ENCODE measurements at regions of chr10 and their contacts with region 1.

Region 1: DNA sequence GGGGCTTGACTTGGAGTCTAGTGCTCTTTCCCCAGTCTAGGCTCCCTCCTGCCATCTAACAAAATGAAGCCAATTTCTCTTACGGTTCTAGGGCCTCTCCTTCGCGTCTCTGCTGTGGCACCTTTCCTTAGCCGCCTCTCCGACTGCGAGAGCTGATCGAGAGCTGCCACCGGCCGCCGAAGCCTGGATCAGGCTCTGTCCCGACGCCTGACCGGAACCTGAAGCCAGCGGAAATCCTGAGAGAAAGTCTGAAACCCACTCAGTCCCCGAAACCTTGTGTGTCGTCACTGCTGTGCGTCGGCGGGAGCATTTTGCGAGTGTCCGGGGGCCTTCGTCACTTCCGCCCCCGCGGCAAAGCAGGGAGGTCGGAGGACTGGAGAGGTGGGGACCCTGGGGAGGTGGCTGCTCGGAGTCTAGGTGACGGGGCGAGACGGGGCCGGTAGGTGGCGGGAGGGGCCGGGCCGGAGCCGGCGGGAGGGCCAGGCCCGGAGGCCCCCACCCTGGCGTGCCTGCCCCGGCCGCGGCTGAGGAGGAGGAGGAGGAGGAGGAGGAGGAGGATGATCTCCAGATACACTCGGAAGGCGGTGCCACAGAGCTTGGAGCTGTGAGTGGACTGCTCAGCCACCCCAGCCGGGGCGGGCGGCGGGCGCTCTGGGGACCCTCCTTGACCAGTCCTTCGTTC is at the starts of genes ECD and FAM149B1:
- DNase-seq: peak; percentile 96
- H3K4me3 Mint-ChIP-seq: peak within 1 kb of the TSS; percentile 100
- H3K27ac Mint-ChIP-seq: peak within 1 kb of the TSS; percentile 100
- H3K4me1 Mint-ChIP-seq: peaks cover 37% of the 10 kb centered on the region
- H3K27me3 Mint-ChIP-seq: no peaks in the 10 kb centered on the region
- total RNA-seq, gene ECD: 26.5 to 28.1 TPM
- total RNA-seq, gene FAM149B1: 13.3 to 13.7 TPM

Region 2: DNA sequence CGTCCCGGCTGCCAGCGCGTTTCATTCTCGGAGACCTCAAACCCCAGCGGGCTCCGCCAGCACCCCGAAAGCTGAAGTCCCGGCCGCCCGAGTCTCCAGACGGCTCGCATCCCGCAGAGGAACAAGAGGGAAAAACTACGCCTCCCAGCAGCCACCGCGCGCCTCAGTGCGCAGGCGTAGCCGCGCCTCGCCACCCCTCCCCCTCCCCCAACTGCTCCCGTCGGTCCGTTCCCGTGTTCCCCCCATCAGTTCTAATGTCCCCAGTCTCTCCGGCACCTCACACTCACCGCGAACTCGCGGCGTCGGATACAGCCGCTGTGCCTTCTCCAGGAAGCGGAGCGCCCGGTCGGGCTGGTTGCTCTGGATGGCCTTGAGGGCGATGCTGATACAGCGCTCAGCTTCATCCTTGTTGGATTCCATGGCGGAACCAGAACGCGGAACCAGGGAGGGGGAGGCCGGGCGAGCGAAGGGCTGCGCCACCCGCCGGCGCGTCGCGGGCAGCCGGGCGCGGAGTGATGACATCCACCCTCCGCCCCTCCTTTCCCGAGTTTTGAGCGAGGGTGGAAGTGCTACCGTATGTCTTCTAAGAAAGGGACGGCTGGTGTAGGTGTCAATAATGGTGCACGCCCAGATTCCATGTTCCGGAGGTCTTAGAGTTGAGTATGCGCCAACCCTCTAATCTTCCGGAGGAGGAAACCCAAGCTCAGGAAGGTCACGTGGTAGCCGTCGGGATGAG is 813.3 kb before region 1 on chr10 and contains the start of gene DNAJB12:
- CTCF ChIA-PET with region 1: no interaction called
- intact Hi-C with region 1: loop called (anchors 5 kb)
- DNase-seq: peak; percentile 91
- H3K4me3 Mint-ChIP-seq: peak within 1 kb of the TSS; percentile 96
- H3K27ac Mint-ChIP-seq: peak within 1 kb of the TSS; percentile 97
- H3K4me1 Mint-ChIP-seq: peaks cover 34% of the 10 kb centered on the region
- H3K27me3 Mint-ChIP-seq: no peaks in the 10 kb centered on the region
- total RNA-seq, gene DNAJB12: 13.7 to 14.1 TPM

Region 3: GRCh38 chr10:72692057-72692910 is 475.6 kb before region 1 on chr10 and contains the start of gene MCU:
- CTCF ChIA-PET with region 1: no interaction called
- intact Hi-C with region 1: loop called (anchors 10 kb)
- DNase-seq: peak; percentile 95
- H3K4me3 Mint-ChIP-seq: peak within 1 kb of the TSS; percentile 83
- H3K27ac Mint-ChIP-seq: no peak within 1 kb of the TSS
- H3K4me1 Mint-ChIP-seq: peaks cover 32% of the 10 kb centered on the region
- H3K27me3 Mint-ChIP-seq: no peaks in the 10 kb centered on the region
- total RNA-seq, gene MCU: 23.6 to 25.6 TPM

Region 4: DNA sequence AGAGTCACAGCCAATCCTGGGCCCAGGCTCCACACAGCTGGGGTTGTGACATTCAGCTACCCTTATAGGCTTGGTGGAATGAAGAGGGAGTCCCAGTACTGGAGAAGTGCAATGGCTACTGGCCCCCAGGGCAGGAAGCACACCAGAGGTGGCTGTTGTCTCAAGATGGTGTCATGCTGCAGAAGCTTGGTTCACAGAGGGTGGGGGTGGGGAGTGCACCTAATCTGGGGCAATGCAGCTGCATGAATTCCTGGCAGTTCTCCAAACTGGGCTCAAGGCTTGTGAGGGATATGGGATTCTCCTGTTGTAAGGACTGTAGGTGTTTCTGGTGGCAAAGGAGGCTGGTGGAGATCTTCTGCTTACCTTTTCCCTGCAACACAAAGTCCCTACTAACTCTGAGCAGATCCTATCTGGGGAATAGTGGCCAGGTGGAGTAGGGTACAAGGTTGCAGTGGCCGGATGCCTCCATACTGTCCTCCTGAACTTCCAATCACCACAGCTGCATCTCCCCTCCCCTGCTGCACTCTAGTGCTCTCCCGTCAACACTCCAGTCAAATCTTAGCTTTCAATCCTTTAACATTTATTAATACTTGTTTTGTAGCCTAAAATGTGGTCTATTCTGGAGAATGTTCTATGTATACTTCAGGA is 185.9 kb before region 1 on chr10:
- CTCF ChIA-PET with region 1: no interaction called
- intact Hi-C with region 1: no loop called
- DNase-seq: no peak
- H3K4me3 Mint-ChIP-seq: no peak overlapping the region
- H3K27ac Mint-ChIP-seq: no peak overlapping the region
- H3K4me1 Mint-ChIP-seq: no peaks in the 10 kb centered on the region
- H3K27me3 Mint-ChIP-seq: peaks cover 5% of the 10 kb centered on the region

Region 5: DNA sequence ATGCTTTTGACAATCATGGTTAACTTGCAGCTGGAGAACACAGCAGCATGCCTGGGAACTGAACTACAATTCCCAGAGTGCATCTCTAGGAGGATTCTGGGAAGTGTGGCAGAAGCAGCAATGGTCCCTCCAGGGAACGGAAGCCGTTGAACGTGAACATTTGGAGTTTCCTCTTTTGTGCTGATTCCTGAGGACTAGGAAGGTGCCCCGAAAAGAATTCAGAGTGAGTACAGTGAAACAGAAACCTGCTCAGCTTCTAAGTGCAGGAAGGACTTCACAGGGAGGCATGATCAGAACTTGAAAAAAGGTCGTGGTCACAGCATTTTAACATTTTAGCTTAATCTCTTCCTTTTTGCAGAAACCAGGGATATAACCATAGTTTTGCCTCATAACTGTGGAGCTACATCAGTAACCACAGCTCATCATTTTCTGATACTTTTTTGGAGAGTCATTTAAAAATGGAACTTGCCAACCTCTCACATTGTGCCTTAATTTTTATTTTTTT is 57.5 kb before region 1 on chr10 and contains the start of gene NUDT13:
- CTCF ChIA-PET with region 1: no interaction called
- intact Hi-C with region 1: loop called (anchors 5 kb)
- DNase-seq: peak; percentile 65
- H3K4me3 Mint-ChIP-seq: peak within 1 kb of the TSS; percentile 84
- H3K27ac Mint-ChIP-seq: peak within 1 kb of the TSS; percentile 88
- H3K4me1 Mint-ChIP-seq: peaks cover 15% of the 10 kb centered on the region
- H3K27me3 Mint-ChIP-seq: no peaks in the 10 kb centered on the region
- total RNA-seq, gene NUDT13: 0.72 to 0.83 TPM

Measured in activated naive CD4-positive, alpha-beta T cell treated with anti-CD3 and anti-CD28 coated beads for 36 hours (primary cell).